ENCODE measurements at regions of chr7 and their contacts with region 1.

Region 1: GRCh38 chr7:73329861-73330581 is 2.1 kb downstream of the FKBP6 start:
- DNase-seq: no peak
- H3K4me3 ChIP-seq: no peak overlapping the region
- H3K27me3 ChIP-seq: no peaks in the 10 kb centered on the region
- CTCF ChIP-seq: no peak

Region 2: GRCh38 chr7:73308665-73309214 is 21.3 kb before region 1 on chr7 and contains the start of gene NSUN5:
- CTCF ChIA-PET with region 1: no interaction called
- POLR2A ChIA-PET with region 1: no interaction called
- DNase-seq: no peak
- H3K4me3 ChIP-seq: peak within 1 kb of the TSS; percentile 72
- H3K27me3 ChIP-seq: no peaks in the 10 kb centered on the region
- CTCF ChIP-seq: no peak
- polyA plus RNA-seq, gene NSUN5: 13.7 and 23.6 TPM in 2 replicates

Region 3: GRCh38 chr7:73342645-73343044 is 12.6 kb after region 1 on chr7:
- CTCF ChIA-PET with region 1: interaction called, 11 read pairs
- POLR2A ChIA-PET with region 1: no interaction called
- DNase-seq: no peak
- H3K4me3 ChIP-seq: no peak overlapping the region
- H3K27me3 ChIP-seq: peaks cover 4% of the 10 kb centered on the region
- CTCF ChIP-seq: peak; percentile 79

Region 4: DNA sequence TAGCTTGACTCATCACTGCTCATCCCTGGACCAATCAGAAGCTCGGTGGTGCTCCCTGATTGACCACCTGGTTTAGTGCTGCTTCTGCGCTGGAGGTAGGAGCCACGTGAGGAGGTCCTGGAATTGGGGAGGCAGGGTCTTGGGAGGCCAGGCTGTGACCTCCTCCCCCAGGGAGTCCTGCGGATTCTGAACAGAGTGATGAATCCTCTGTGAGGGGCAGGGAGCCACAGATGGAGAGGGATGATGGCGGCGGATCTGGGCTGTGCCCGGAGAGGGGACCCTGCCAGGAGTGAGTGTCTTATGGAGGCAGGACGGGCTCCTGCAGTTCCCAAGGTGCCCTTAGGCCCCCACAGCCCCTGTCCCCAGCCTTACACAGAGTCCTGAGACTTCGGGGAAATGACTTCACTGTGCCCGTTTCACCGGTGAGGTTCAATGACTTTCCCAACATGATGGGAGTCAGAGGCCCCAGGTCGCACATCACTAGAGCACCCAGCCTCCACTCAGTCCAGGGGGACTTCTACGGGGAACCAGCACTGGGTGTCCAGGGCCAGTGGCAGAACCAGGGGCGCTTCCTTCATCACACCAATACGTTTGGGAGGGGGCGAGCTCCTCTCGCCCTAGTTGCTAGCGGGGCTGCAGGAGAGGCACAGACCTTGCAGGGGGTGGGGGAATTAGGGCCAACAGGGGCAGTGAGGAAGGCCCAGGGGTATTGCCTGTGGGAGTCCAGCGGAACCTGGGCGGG is 46.8 kb after region 1 on chr7:
- CTCF ChIA-PET with region 1: no interaction called
- POLR2A ChIA-PET with region 1: no interaction called
- DNase-seq: no peak
- H3K4me3 ChIP-seq: no peak overlapping the region
- H3K27me3 ChIP-seq: peaks cover 7% of the 10 kb centered on the region
- CTCF ChIP-seq: no peak

Measured in BJ (cell line).